Left cardiac atrium (tissue), 4 donors: ENCODE measurements at regions of chr2 and their contacts with region 1.

Region 1: GRCh38 chr2:37506407-37507050 is 162.1 kb downstream of the QPCT start:
- DNase-seq: no peak
- ATAC-seq: peak; percentile 89 to 92

Region 2: DNA sequence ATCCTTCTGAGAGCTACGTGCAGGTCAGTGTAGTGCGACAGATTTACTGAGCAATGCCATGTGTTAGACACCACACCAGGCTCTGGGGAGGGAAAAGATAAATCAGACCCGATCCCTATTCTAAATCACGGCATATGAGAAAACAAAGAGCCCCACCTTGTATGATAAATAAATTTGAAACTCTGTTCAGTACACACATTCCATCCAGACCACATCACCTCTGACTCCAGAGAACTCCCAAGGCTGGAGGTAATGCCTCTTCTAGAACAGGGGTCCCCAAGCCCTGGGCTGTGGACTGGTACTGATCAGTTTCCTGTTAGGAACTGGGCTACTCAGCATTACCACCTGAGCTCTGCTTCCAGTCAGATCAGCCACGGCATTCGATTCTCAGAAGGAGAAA is 84.8 kb before region 1 on chr2:
- intact Hi-C with region 1: loop called in 1 of 2 experiments (anchors 10 kb)
- DNase-seq: no peak
- ATAC-seq: no peak